T-cell (primary cell): ENCODE measurements at regions of chr5 and their contacts with region 1.

Region 1: GRCh38 chr5:164772122-164772521 is 1266.7 kb downstream of the MAT2B start:
- DNase-seq: no peak
- ATAC-seq: no peak
- H3K4me3 ChIP-seq: no peak overlapping the region
- H3K4me3 Mint-ChIP-seq: no peak overlapping the region
- H3K27ac ChIP-seq: no peak overlapping the region
- H3K27ac Mint-ChIP-seq: no peak overlapping the region
- H3K4me1 ChIP-seq: no peaks in the 10 kb centered on the region
- H3K4me1 Mint-ChIP-seq: no peaks in the 10 kb centered on the region
- H3K27me3 ChIP-seq: no peaks in the 10 kb centered on the region
- H3K27me3 Mint-ChIP-seq: no peaks in the 10 kb centered on the region

Region 2: GRCh38 chr5:164553851-164554250 is 218.3 kb before region 1 on chr5:
- CTCF ChIA-PET with region 1: no interaction called
- POLR2A ChIA-PET with region 1: no interaction called
- DNase-seq: no peak
- ATAC-seq: no peak
- H3K4me3 ChIP-seq: no peak overlapping the region
- H3K4me3 Mint-ChIP-seq: no peak overlapping the region
- H3K27ac ChIP-seq: no peak overlapping the region
- H3K27ac Mint-ChIP-seq: no peak overlapping the region
- H3K4me1 ChIP-seq: no peaks in the 10 kb centered on the region
- H3K4me1 Mint-ChIP-seq: no peaks in the 10 kb centered on the region
- H3K27me3 ChIP-seq: no peaks in the 10 kb centered on the region
- H3K27me3 Mint-ChIP-seq: no peaks in the 10 kb centered on the region

Region 3: GRCh38 chr5:164951570-164951969 is 179.4 kb after region 1 on chr5:
- CTCF ChIA-PET with region 1: no interaction called
- POLR2A ChIA-PET with region 1: no interaction called
- DNase-seq: no peak
- ATAC-seq: no peak
- H3K4me3 ChIP-seq: no peak overlapping the region
- H3K4me3 Mint-ChIP-seq: no peak overlapping the region
- H3K27ac ChIP-seq: no peak overlapping the region
- H3K27ac Mint-ChIP-seq: no peak overlapping the region
- H3K4me1 ChIP-seq: no peaks in the 10 kb centered on the region
- H3K4me1 Mint-ChIP-seq: no peaks in the 10 kb centered on the region
- H3K27me3 ChIP-seq: no peaks in the 10 kb centered on the region
- H3K27me3 Mint-ChIP-seq: no peaks in the 10 kb centered on the region

Region 4: GRCh38 chr5:166324372-166324771 is 1552.2 kb after region 1 on chr5:
- CTCF ChIA-PET with region 1: no interaction called
- POLR2A ChIA-PET with region 1: interaction called in 1 of 2 experiments, 15 read pairs
- DNase-seq: no peak
- ATAC-seq: no peak
- H3K4me3 ChIP-seq: no peak overlapping the region
- H3K4me3 Mint-ChIP-seq: no peak overlapping the region
- H3K27ac ChIP-seq: no peak overlapping the region
- H3K27ac Mint-ChIP-seq: no peak overlapping the region
- H3K4me1 ChIP-seq: no peaks in the 10 kb centered on the region
- H3K4me1 Mint-ChIP-seq: no peaks in the 10 kb centered on the region
- H3K27me3 ChIP-seq: no peaks in the 10 kb centered on the region
- H3K27me3 Mint-ChIP-seq: no peaks in the 10 kb centered on the region